ENCODE measurements at regions of chr1 and their contacts with region 1.

Region 1: GRCh38 chr1:117654493-117655219 is 48.8 kb downstream of the TENT5C start:
- DNase-seq: no peak
- ATAC-seq: peak; percentile 12
- H3K4me3 ChIP-seq: no peak overlapping the region
- H3K27ac ChIP-seq: peak overlapping the region; percentile 4; the same call in 1 of the 3 replicates
- H3K4me1 ChIP-seq: peaks cover 46 to 63% of the 10 kb centered on the region in 2 experiments
- H3K27me3 ChIP-seq: no peaks in the 10 kb centered on the region
- CTCF ChIP-seq: no peak
- EP300 ChIP-seq: no peak
- POLR2A ChIP-seq: no peak
- RAD21 ChIP-seq: no peak

Region 2: DNA sequence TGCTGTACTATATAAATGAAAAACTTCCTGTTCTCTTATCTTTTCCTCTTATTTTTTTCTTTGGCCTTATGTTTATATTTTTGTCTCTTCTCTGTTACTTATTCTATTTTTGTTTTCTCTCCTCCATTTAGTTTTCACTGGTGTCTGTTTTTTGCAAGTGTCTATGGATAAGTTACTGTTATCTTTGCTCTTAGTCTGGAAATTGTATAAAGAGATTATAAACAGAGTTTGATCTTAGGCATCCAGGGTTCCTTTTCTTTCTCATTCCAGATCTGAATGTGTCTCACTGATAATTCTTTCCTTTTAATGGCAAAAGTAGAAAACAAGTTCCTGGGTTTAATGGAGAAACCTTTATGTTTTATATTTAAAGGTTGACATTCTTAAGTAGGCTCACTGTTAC is 252.9 kb before region 1 on chr1:
- CTCF ChIA-PET with region 1: no interaction called
- POLR2A ChIA-PET with region 1: no interaction called
- in situ Hi-C with region 1: no loop called
- intact Hi-C with region 1: no loop called
- DNase-seq: no peak
- ATAC-seq: no peak
- H3K4me3 ChIP-seq: no peak overlapping the region
- H3K27ac ChIP-seq: peak overlapping the region; percentile 14; the same call in 1 of the 3 replicates
- H3K4me1 ChIP-seq: peaks cover 0 to 13% of the 10 kb centered on the region in 2 experiments; a peak in 2 of 5 replicates
- H3K27me3 ChIP-seq: no peaks in the 10 kb centered on the region
- CTCF ChIP-seq: no peak
- EP300 ChIP-seq: no peak
- POLR2A ChIP-seq: no peak
- RAD21 ChIP-seq: no peak

Region 3: GRCh38 chr1:117632269-117633067 is 22.2 kb before region 1 on chr1:
- CTCF ChIA-PET with region 1: no interaction called
- POLR2A ChIA-PET with region 1: interaction called, 13 read pairs
- in situ Hi-C with region 1: no loop called
- intact Hi-C with region 1: no loop called
- DNase-seq: no peak
- ATAC-seq: no peak
- H3K4me3 ChIP-seq: no peak overlapping the region
- H3K27ac ChIP-seq: no peak overlapping the region
- H3K4me1 ChIP-seq: peaks cover 9 to 21% of the 10 kb centered on the region in 2 experiments
- H3K27me3 ChIP-seq: no peaks in the 10 kb centered on the region
- CTCF ChIP-seq: no peak
- EP300 ChIP-seq: no peak
- POLR2A ChIP-seq: no peak
- RAD21 ChIP-seq: no peak

Region 4: DNA sequence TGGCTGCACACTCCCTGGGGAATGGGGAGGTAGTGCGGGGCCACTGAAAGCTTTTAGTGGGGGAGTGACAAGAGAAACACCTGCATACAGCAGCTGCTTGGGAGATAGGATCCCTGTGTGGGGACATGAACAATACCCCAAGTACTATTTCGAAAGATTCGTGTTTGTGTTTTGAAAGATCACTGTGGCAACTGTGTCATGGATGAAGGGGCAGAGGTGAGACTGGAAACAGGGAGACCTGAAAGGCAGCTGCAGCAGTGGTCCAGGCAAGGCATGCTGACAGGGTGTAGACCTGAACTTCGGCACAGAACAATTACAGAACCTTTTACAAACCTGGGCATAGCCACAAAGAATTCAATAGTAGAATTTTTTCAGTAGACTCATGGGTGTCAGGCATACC is 15.9 kb before region 1 on chr1:
- CTCF ChIA-PET with region 1: no interaction called
- POLR2A ChIA-PET with region 1: interaction called, 47 read pairs
- in situ Hi-C with region 1: no loop called
- intact Hi-C with region 1: no loop called
- DNase-seq: peak in 3 of 4 experiments; percentile 43 to 62 (median 58)
- ATAC-seq: peak; percentile 37; the same call in 2 of the 3 replicates
- H3K4me3 ChIP-seq: no peak overlapping the region
- H3K27ac ChIP-seq: no peak overlapping the region
- H3K4me1 ChIP-seq: peaks cover 11 to 29% of the 10 kb centered on the region in 2 experiments
- H3K27me3 ChIP-seq: no peaks in the 10 kb centered on the region
- CTCF ChIP-seq: no peak
- EP300 ChIP-seq: no peak
- POLR2A ChIP-seq: no peak
- RAD21 ChIP-seq: no peak

Measured in K562 (cell line).